ENCODE measurements at regions of chr12 and their contacts with region 1.

Region 1: GRCh38 chr12:96516472-96517430 is 27.4 kb downstream of the CFAP54 start:
- DNase-seq: peak; percentile 47 to 79 (median 50)
- ATAC-seq: peak; percentile 81
- H3K4me3 ChIP-seq: no peak overlapping the region
- H3K27ac ChIP-seq: no peak overlapping the region
- H3K4me1 ChIP-seq: no peaks in the 10 kb centered on the region; a peak in 1 of 5 replicates
- H3K27me3 ChIP-seq: peaks cover 0 to 4% of the 10 kb centered on the region in 2 experiments; a peak in 1 of 5 replicates
- CTCF ChIP-seq: peak; percentile 54 to 84 (median 67); a peak in 5 of 6 replicates
- EP300 ChIP-seq: no peak
- POLR2A ChIP-seq: no peak
- RAD21 ChIP-seq: peak; percentile 87 to 92

Region 2: GRCh38 chr12:95623585-95624042 is 893.1 kb before region 1 on chr12:
- CTCF ChIA-PET with region 1: no interaction called
- POLR2A ChIA-PET with region 1: no interaction called
- in situ Hi-C with region 1: loop called (anchors 25 kb)
- intact Hi-C with region 1: no loop called
- DNase-seq: peak; percentile 60 to 68 (median 62)
- ATAC-seq: peak; percentile 98
- H3K4me3 ChIP-seq: no peak overlapping the region
- H3K27ac ChIP-seq: no peak overlapping the region
- H3K4me1 ChIP-seq: no peaks in the 10 kb centered on the region; a peak in 1 of 5 replicates
- H3K27me3 ChIP-seq: peaks cover 7 to 13% of the 10 kb centered on the region in 2 experiments; a peak in 3 of 5 replicates
- CTCF ChIP-seq: peak; percentile 73 to 81 (median 76)
- EP300 ChIP-seq: no peak
- POLR2A ChIP-seq: no peak
- RAD21 ChIP-seq: peak; percentile 34 to 68

Region 3: GRCh38 chr12:96061864-96062453 is 454.8 kb before region 1 on chr12:
- CTCF ChIA-PET with region 1: interaction called, 24 read pairs
- POLR2A ChIA-PET with region 1: no interaction called
- in situ Hi-C with region 1: loop called (anchors 5 kb)
- intact Hi-C with region 1: loop called (anchors 1 kb)
- DNase-seq: peak; percentile 57 to 78 (median 60)
- ATAC-seq: peak; percentile 96
- H3K4me3 ChIP-seq: no peak overlapping the region
- H3K27ac ChIP-seq: no peak overlapping the region
- H3K4me1 ChIP-seq: no peaks in the 10 kb centered on the region
- H3K27me3 ChIP-seq: peaks cover 0 to 11% of the 10 kb centered on the region in 2 experiments; a peak in 3 of 5 replicates
- CTCF ChIP-seq: peak; percentile 72 to 84 (median 76)
- EP300 ChIP-seq: no peak
- POLR2A ChIP-seq: no peak
- RAD21 ChIP-seq: peak; percentile 91 to 96

Region 4: DNA sequence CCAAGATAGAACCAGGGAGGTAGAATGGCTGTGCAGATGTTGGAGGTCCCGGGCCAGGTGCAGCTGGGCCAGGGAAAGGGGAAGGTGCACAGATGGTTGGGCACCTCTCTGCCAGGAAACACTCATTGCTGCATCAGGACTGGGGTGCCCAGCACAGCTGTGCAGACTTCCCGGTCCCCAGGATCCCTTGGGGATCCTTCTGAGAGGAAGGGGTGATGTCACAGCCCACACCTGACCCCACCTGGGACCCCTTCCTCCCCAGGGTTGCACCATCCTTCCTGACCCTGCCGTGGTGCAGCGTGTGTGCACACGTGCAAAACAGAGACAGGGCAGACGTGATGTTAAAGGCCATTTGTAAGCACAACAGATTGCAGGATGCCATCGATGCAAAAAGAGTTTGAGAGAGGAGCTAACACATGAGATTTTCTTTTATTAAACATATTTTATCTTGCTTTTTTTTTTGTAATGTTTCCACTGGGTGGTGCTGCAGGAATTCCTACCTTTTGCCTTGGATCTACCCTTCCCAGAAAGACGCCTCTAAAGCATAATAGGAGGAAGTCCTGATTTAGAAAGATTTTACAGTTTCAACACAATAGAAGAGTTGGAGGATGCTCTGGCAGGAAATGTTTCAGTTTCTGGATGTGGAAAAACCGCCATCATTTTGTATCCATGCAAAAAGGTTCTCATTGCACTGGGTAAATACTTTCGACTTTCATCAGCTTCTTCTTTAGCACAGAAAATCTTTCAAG is 307.8 kb before region 1 on chr12:
- CTCF ChIA-PET with region 1: interaction called, 11 read pairs
- POLR2A ChIA-PET with region 1: no interaction called
- in situ Hi-C with region 1: no loop called
- intact Hi-C with region 1: loop called (anchors 2 kb)
- DNase-seq: no peak
- ATAC-seq: no peak
- H3K4me3 ChIP-seq: no peak overlapping the region
- H3K27ac ChIP-seq: no peak overlapping the region
- H3K4me1 ChIP-seq: no peaks in the 10 kb centered on the region
- H3K27me3 ChIP-seq: peaks cover 11 to 24% of the 10 kb centered on the region in 2 experiments; a peak in 3 of 5 replicates
- CTCF ChIP-seq: peak in 2 of 3 experiments; percentile 14 to 32; a peak in 2 of 6 replicates
- EP300 ChIP-seq: no peak
- POLR2A ChIP-seq: no peak
- RAD21 ChIP-seq: 0 out of 4 replicates have a peak, but pooled peaks of 1 of the 2 experiments have one; percentile 9

Region 5: DNA sequence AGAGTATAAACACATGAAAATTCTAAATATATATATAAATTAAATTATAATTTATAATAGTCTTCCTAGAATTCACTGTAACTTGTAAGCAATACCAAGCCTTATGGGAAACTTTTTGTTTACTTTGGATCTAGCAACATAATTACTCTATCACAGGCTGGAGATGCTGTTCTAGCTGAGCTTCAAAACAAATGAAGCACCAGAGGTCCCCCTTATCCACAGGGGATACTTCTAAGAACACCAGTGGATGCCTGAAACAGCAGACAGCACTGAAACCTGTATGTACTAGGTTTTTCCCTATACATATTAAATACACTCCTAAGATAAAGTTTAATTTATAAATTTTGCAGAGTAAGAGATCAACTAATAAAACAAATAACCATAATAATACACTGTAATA is 213.1 kb before region 1 on chr12:
- CTCF ChIA-PET with region 1: interaction called, 3 read pairs
- POLR2A ChIA-PET with region 1: no interaction called
- in situ Hi-C with region 1: no loop called
- intact Hi-C with region 1: loop called (anchors 10 kb)
- DNase-seq: no peak
- ATAC-seq: peak; percentile 61; the same call in 2 of the 3 replicates
- H3K4me3 ChIP-seq: no peak overlapping the region
- H3K27ac ChIP-seq: no peak overlapping the region
- H3K4me1 ChIP-seq: no peaks in the 10 kb centered on the region
- H3K27me3 ChIP-seq: no peaks in the 10 kb centered on the region
- CTCF ChIP-seq: peak in 1 of 3 experiments; percentile 6; a peak in 1 of 6 replicates
- EP300 ChIP-seq: no peak
- POLR2A ChIP-seq: no peak
- RAD21 ChIP-seq: peak in 1 of 2 experiments; percentile 25; a peak in 3 of 4 replicates

Region 6: DNA sequence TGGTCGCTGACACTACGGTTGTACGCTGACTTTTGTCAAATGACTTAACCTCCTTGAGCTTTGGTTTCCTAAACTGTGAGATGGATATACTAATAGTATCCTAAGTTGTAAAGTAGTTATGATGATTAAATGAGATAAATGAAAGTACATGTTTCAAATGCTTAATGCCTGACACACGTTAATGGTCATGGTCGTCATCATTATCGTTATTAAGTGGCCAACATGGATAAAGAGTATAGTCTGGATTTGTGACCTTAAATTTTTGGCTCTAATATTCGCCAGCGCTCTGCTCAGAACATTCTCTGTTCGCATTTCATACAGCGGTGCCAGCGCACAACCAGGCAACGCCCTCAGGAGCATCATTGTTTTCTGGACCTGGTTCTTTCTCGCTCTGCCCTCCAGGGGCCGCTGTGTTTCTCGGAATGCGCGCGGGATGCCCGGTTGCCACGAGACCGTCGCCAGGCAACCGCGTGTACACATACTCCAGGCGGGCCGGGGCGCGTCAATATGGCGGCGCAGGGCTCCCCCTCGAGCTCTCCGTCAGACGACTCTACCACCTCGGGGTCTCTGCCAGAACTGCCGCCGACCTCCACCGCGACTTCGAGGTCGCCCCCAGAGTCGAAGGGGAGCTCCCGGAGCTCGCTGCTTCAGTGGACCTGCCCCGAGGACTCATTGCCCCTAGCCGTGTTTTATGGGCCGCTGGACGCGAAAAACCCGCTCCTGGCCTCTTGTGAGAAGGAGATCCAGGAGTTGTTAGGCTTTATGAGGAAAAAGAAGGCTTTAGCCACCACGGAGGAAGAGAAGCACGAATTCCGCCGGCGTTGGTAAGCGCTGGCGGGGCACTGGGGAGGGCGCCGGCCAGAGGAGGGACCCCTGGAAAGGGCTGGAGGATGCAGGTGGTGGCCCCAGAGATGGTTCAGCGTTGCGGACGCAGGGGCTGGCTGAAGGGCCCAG is 27.4 kb before region 1 on chr12 and contains the start of gene CFAP54:
- CTCF ChIA-PET with region 1: no interaction called
- POLR2A ChIA-PET with region 1: no interaction called
- in situ Hi-C with region 1: no loop called
- intact Hi-C with region 1: loop called (anchors 1 kb)
- DNase-seq: peak; percentile 88 to 94 (median 93)
- ATAC-seq: peak; percentile 99
- H3K4me3 ChIP-seq: peak within 1 kb of the TSS; percentile 61
- H3K27ac ChIP-seq: no peak within 1 kb of the TSS
- H3K4me1 ChIP-seq: peaks cover 3 to 8% of the 10 kb centered on the region in 2 experiments; a peak in 3 of 5 replicates
- H3K27me3 ChIP-seq: peaks cover 0 to 2% of the 10 kb centered on the region in 2 experiments; a peak in 2 of 5 replicates
- CTCF ChIP-seq: peak; percentile 89 to 94 (median 92)
- EP300 ChIP-seq: no peak
- POLR2A ChIP-seq: no peak
- RAD21 ChIP-seq: peak; percentile 53 to 66
- polyA plus RNA-seq, gene CFAP54: 0.03 to 0.08 TPM

Region 7: DNA sequence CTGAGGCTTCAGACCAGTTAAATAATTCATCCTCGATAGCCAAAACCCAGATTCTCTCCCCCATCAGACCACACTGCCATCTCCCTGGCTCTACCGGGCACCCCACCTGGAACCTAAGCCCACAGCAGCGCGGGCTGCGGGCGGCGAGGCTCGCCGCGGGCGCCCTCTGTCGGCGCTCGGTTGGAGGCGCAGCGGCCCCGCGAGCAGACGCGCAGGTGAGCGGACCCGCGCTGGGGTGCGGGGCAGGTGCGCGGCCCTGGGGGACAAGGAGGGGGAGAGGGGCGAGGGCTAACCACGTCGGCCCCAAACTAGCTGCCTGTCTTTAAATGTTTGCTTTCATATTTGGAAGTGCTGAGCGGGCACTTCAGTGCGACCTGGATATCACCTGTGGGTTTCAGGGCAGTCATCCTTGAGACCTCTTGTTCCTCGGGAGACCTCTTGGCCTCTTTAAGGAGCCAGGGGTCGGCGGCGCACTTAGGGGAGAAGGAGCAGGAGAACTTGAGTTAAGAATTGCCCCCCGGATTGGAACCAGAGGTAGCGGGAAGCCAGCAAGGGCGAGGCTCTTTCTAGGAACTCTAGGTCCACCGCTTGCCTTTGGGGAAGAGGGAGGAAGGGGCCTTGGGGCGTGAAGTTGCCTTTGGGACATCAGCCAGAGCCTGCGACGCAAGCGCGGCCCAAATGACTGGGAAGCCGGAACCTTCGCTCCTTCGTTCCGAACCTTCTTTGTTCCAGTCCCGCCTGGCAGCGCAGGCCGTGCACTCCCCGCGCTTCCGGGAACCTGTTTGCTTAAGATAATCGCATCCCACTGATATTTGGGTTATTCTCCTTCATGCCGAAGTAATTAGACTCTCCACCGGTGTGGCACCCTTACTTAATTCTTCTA is 469.0 kb after region 1 on chr12:
- CTCF ChIA-PET with region 1: no interaction called
- POLR2A ChIA-PET with region 1: no interaction called
- in situ Hi-C with region 1: no loop called
- intact Hi-C with region 1: no loop called
- DNase-seq: peak; percentile 37 to 69 (median 57)
- ATAC-seq: peak; percentile 92
- H3K4me3 ChIP-seq: peak overlapping the region; percentile 15; the same call in 1 of the 2 replicates
- H3K27ac ChIP-seq: no peak overlapping the region
- H3K4me1 ChIP-seq: peaks cover 9 to 11% of the 10 kb centered on the region in 2 experiments
- H3K27me3 ChIP-seq: peaks cover 0 to 6% of the 10 kb centered on the region in 2 experiments; a peak in 2 of 5 replicates
- CTCF ChIP-seq: peak; percentile 62 to 83 (median 75)
- EP300 ChIP-seq: no peak
- POLR2A ChIP-seq: no peak
- RAD21 ChIP-seq: peak; percentile 50 to 72

Measured in K562 (cell line).